CD4-positive, alpha-beta T cell (primary cell): ENCODE measurements at regions of chr17 and their contacts with region 1.

Region 1: GRCh38 chr17:16521070-16521727 is 29.2 kb upstream of the LRRC75A start:
- DNase-seq: peak; percentile 37 to 86 (median 48)
- ATAC-seq: peak; percentile 86
- H3K4me3 ChIP-seq: no peak overlapping the region
- H3K4me3 Mint-ChIP-seq: no peak overlapping the region
- H3K27ac ChIP-seq: no peak overlapping the region
- H3K27ac Mint-ChIP-seq: no peak overlapping the region
- H3K4me1 ChIP-seq: peaks cover 6% of the 10 kb centered on the region
- H3K4me1 Mint-ChIP-seq: peaks cover 3% of the 10 kb centered on the region
- H3K27me3 ChIP-seq: peaks cover 3 to 8% of the 10 kb centered on the region in 2 experiments
- H3K27me3 Mint-ChIP-seq: peaks cover 50% of the 10 kb centered on the region
- CTCF ChIP-seq: peak; percentile 86

Region 2: GRCh38 chr17:16453493-16453851 is 67.7 kb before region 1 on chr17:
- CTCF ChIA-PET with region 1: interaction called, 4 read pairs
- POLR2A ChIA-PET with region 1: interaction called, 8 read pairs
- intact Hi-C with region 1: loop called (anchors 1 kb)
- DNase-seq: no peak
- ATAC-seq: no peak
- H3K4me3 ChIP-seq: no peak overlapping the region
- H3K4me3 Mint-ChIP-seq: no peak overlapping the region
- H3K27ac ChIP-seq: no peak overlapping the region
- H3K27ac Mint-ChIP-seq: peak overlapping the region; percentile 50
- H3K4me1 ChIP-seq: peaks cover 8% of the 10 kb centered on the region
- H3K4me1 Mint-ChIP-seq: peaks cover 14% of the 10 kb centered on the region
- H3K27me3 ChIP-seq: no peaks in the 10 kb centered on the region
- H3K27me3 Mint-ChIP-seq: no peaks in the 10 kb centered on the region
- CTCF ChIP-seq: no peak